ENCODE measurements at regions of chr19 and their contacts with region 1.

Region 1: GRCh38 chr19:41883821-41884733 is 1.1 kb downstream of the ARHGEF1 start:
- DNase-seq: peak; percentile 86
- ATAC-seq: peak; percentile 82
- H3K4me3 Mint-ChIP-seq: peak overlapping the region; percentile 96
- H3K27ac Mint-ChIP-seq: peak overlapping the region; percentile 97
- H3K4me1 Mint-ChIP-seq: peaks cover 78% of the 10 kb centered on the region
- H3K27me3 Mint-ChIP-seq: no peaks in the 10 kb centered on the region
- CTCF ChIP-seq: no peak

Region 2: DNA sequence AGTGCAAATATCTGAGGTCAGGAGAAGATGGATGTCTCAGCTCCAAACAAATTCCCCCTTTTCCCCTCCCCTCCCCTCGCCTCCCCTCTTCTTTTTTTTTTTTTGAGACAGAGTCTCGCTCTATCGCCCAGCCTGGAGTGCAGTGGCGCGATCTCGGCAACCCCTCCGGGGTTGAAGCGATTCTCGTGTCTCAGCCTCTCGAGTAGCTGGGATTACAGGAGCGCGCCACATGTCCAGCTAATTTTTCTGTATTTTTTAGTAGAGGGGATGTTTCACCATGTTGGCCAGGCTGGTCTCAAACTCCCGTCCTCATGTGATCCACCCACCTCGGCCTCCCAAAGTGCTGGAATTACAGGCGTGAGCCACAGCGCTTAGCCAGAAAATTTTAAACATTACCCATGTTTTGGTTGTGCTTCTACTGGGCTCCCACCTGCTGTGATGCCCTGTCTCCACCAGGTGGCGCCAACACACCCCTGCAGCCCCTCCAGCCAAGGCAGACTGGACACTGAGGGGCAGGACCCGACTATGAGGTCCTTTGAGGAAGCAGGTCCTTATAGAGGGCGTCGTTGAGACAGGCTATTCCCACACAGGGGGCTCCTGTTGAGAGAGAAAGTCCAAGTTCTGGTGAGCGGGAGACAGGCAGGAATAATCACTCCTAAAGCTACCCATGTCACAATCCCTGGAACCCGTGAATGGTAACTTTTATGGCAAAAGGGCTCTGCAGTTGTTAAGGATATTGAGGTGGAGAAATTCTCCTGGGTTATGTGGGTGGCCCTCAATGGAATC is 434.8 kb before region 1 on chr19:
- CTCF ChIA-PET with region 1: no interaction called
- POLR2A ChIA-PET with region 1: no interaction called
- intact Hi-C with region 1: no loop called
- DNase-seq: peak; percentile 76
- ATAC-seq: peak; percentile 97
- H3K4me3 Mint-ChIP-seq: peak overlapping the region; percentile 80
- H3K27ac Mint-ChIP-seq: peak overlapping the region; percentile 46
- H3K4me1 Mint-ChIP-seq: peaks cover 23% of the 10 kb centered on the region
- H3K27me3 Mint-ChIP-seq: peaks cover 2% of the 10 kb centered on the region
- CTCF ChIP-seq: peak; percentile 72

Region 3: DNA sequence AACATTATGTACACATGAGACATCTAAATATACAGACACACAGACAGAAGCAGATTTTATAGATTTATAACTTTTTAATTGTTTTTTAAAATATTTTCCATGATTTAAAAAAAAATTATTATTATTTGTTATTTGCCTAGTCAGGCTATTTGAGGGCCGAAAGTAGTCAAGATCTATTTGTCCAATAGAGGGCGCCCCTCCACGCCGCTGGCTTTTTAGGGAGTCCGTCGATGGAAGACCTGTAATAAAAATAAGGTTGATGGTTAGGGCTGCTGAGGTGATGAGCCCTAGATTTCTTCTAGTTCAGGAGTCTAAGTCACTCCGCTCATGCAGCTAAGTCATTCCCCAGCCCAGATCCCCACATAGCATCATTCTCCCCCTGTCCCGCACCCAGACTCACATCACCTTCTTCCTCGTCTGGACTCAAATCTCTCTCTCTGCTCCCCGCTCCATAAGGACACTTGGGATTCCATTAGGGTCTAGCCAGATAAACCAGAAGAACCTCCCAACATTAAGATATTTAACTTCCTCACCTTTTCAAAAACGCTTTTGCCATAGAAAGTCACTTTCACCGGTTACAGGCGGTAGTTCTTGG is 342.0 kb before region 1 on chr19:
- CTCF ChIA-PET with region 1: no interaction called
- POLR2A ChIA-PET with region 1: no interaction called
- intact Hi-C with region 1: loop called (anchors 10 kb)
- DNase-seq: peak; percentile 56
- ATAC-seq: no peak
- H3K4me3 Mint-ChIP-seq: peak overlapping the region; percentile 70
- H3K27ac Mint-ChIP-seq: peak overlapping the region; percentile 57
- H3K4me1 Mint-ChIP-seq: peaks cover 59% of the 10 kb centered on the region
- H3K27me3 Mint-ChIP-seq: no peaks in the 10 kb centered on the region
- CTCF ChIP-seq: no peak

Region 4: GRCh38 chr19:41866284-41866683 is 17.8 kb before region 1 on chr19:
- CTCF ChIA-PET with region 1: interaction called, 41 read pairs
- POLR2A ChIA-PET with region 1: interaction called, 279 read pairs
- intact Hi-C with region 1: no loop called
- DNase-seq: no peak
- ATAC-seq: no peak
- H3K4me3 Mint-ChIP-seq: no peak overlapping the region
- H3K27ac Mint-ChIP-seq: peak overlapping the region; percentile 59
- H3K4me1 Mint-ChIP-seq: peaks cover 83% of the 10 kb centered on the region
- H3K27me3 Mint-ChIP-seq: no peaks in the 10 kb centered on the region
- CTCF ChIP-seq: no peak

Region 5: DNA sequence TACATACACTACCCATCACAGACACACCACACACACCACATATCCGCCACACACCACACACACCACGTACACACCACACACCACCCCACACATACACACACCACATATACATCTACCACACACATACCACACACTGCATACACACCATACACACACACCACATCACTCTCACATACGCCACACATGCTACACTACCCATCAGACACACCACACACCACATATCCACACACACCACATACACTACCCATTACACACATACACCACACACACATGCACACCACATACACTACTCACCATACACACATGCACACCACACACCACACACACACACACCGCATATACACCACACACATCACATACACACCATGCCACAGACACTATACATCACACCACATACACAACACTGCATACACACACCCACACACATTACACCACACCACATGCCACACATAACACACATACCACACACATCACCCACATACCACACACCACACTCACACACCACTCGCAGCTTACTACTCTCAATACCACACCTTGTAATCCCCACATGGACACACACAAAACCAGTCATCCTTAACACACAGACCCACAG is 34.7 kb after region 1 on chr19:
- CTCF ChIA-PET with region 1: no interaction called
- POLR2A ChIA-PET with region 1: no interaction called
- intact Hi-C with region 1: no loop called
- DNase-seq: no peak
- ATAC-seq: no peak
- H3K4me3 Mint-ChIP-seq: no peak overlapping the region
- H3K27ac Mint-ChIP-seq: no peak overlapping the region
- H3K4me1 Mint-ChIP-seq: peaks cover 26% of the 10 kb centered on the region
- H3K27me3 Mint-ChIP-seq: peaks cover 18% of the 10 kb centered on the region
- CTCF ChIP-seq: no peak

Region 6: GRCh38 chr19:41934849-41935374 is 50.8 kb after region 1 on chr19:
- CTCF ChIA-PET with region 1: interaction called, 3 read pairs
- POLR2A ChIA-PET with region 1: interaction called, 15 read pairs
- intact Hi-C with region 1: loop called (anchors 2 kb)
- DNase-seq: peak; percentile 65
- ATAC-seq: peak; percentile 84
- H3K4me3 Mint-ChIP-seq: no peak overlapping the region
- H3K27ac Mint-ChIP-seq: peak overlapping the region; percentile 79
- H3K4me1 Mint-ChIP-seq: peaks cover 63% of the 10 kb centered on the region
- H3K27me3 Mint-ChIP-seq: no peaks in the 10 kb centered on the region
- CTCF ChIP-seq: no peak

Region 7: DNA sequence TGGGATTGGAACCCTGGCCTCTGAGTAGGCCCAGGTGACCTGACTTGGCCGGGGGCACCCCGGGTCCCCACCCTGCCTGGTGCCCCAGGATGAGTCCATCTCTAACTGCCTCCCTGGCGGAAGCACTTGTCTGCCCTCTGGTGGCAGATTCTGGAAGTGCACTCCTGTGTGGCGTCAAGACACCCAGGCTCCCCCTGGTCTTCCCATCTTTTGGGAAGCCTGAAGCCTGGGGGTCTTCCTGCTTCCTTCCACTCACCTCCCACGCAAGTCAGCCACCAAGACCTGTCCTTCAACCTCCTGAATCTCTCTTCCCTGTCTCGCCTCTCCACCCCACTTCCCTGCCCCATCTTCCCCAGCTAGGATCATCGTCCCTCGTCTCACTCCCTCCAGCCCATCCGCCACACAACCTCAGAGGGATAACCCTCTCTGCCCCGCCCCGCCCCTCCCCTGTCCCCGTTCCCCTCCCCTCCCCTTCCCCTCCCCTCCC is 67.7 kb after region 1 on chr19:
- CTCF ChIA-PET with region 1: interaction called, 7 read pairs
- POLR2A ChIA-PET with region 1: interaction called, 90 read pairs
- intact Hi-C with region 1: no loop called
- DNase-seq: peak; percentile 86
- ATAC-seq: peak; percentile 99
- H3K4me3 Mint-ChIP-seq: no peak overlapping the region
- H3K27ac Mint-ChIP-seq: peak overlapping the region; percentile 41
- H3K4me1 Mint-ChIP-seq: peaks cover 29% of the 10 kb centered on the region
- H3K27me3 Mint-ChIP-seq: no peaks in the 10 kb centered on the region
- CTCF ChIP-seq: peak; percentile 92